ENCODE measurements at regions of chr2 and their contacts with region 1.

Region 1: DNA sequence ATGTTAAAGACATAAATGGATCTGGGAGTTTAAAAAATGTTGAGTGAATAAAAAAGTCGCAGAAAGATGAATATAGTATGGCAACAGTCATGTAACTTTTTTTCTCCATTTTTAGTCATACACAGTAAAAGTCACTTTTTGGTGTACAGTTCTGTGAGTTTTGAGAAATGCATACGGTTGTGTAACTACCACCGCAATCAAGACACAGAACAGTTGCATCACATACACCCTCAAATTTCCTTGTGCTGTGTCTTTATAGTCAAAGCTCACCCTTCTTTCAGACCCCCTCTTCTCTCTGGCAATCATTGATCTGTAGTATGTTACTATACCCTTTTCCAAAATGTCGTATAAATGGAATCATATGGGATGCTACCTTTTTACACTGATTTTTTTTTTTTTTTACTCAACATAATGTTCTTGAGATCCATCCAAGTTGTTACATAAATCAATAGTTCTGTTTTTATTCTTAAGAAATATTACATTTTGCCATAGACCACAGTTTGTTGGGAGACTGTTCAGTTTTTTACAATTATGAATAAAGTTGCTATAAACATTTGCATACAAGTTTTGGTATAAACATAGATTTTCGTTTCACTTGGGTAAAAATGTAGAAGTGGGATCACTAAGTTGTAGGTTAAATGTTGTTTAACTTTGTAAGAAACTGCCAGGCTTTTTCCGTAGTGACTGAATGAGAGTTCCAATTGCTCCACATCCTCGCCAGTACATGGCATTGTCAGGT is 35.4 kb upstream of the AGFG1 start:
- DNase-seq: no peak
- H3K4me3 ChIP-seq: no peak overlapping the region
- H3K27ac ChIP-seq: no peak overlapping the region
- H3K4me1 ChIP-seq: no peaks in the 10 kb centered on the region
- H3K27me3 ChIP-seq: no peaks in the 10 kb centered on the region
- CTCF ChIP-seq: no peak
- POLR2A ChIP-seq: no peak

Region 2: GRCh38 chr2:225842945-225843344 is 1593.7 kb before region 1 on chr2:
- intact Hi-C with region 1: loop called (anchors 10 kb)
- DNase-seq: no peak
- H3K4me3 ChIP-seq: no peak overlapping the region
- H3K27ac ChIP-seq: no peak overlapping the region
- H3K4me1 ChIP-seq: peaks cover 17% of the 10 kb centered on the region
- H3K27me3 ChIP-seq: no peaks in the 10 kb centered on the region
- CTCF ChIP-seq: no peak
- POLR2A ChIP-seq: no peak

Measured in vagina (tissue), 2 donors.